CD4-positive, alpha-beta memory T cell (primary cell): ENCODE measurements at regions of chr4 and their contacts with region 1.

Region 1: GRCh38 chr4:110516106-110516922 is 40.4 kb downstream of the ENPEP start:
- DNase-seq: peak; percentile 69 to 75 (median 70)
- H3K4me3 ChIP-seq: peak overlapping the region; percentile 84 to 97
- H3K4me3 Mint-ChIP-seq: peak overlapping the region; percentile 91 to 99 (median 97)
- H3K27ac ChIP-seq: peak overlapping the region; percentile 48
- H3K27ac Mint-ChIP-seq: peak overlapping the region in 6 of 7 donors; percentile 41 to 96 (median 90)
- H3K4me1 ChIP-seq: peaks cover 12% of the 10 kb centered on the region
- H3K4me1 Mint-ChIP-seq: peaks cover 10 to 16% (median 13%) of the 10 kb centered on the region in 4 donors
- H3K27me3 ChIP-seq: no peaks in the 10 kb centered on the region
- H3K27me3 Mint-ChIP-seq: peaks cover 0 to 5% of the 10 kb centered on the region in 2 donors

Region 2: GRCh38 chr4:109424093-109424841 is 1092.0 kb before region 1 on chr4:
- CTCF ChIA-PET with region 1: interaction called, 4 read pairs
- POLR2A ChIA-PET with region 1: no interaction called
- intact Hi-C with region 1: loop called (anchors 2 kb)
- DNase-seq: no peak
- H3K4me3 ChIP-seq: no peak overlapping the region
- H3K4me3 Mint-ChIP-seq: no peak overlapping the region
- H3K27ac ChIP-seq: no peak overlapping the region
- H3K27ac Mint-ChIP-seq: no peak overlapping the region
- H3K4me1 ChIP-seq: peaks cover 3% of the 10 kb centered on the region
- H3K4me1 Mint-ChIP-seq: peaks cover 0 to 4% (median 3%) of the 10 kb centered on the region in 4 donors
- H3K27me3 ChIP-seq: no peaks in the 10 kb centered on the region
- H3K27me3 Mint-ChIP-seq: peaks cover 0 to 3% of the 10 kb centered on the region in 2 donors

Region 3: DNA sequence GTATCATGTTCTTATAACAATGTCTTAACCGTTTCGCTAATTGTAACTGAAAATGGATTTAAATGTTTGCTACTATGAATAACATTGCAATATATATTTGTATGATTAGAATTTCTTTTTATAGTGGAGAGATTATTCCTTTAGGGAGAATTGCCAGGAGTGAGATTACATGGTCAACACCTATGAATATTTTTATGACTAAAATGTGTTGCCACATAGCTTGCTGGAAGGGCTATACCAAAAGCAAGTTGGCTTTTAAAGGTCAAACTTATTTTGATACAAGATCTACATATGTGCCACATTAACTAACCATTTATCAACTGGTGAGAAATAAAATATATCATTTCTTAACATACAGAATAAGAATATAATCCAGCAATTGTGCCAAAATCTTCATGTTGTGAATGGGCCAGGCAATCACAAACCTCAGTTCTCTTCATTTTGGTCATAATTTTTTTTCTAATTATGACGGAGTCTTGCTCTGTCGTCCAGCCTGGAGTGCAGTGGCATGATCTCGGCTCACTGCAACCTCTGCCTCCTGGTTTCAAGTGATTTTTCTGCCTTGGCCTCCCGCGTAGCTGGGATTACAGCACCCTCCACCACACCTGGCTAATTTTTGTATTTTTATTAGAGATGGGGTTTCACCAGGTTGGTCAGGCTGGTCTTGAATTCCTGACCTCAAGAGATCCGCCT is 613.6 kb before region 1 on chr4:
- CTCF ChIA-PET with region 1: no interaction called
- POLR2A ChIA-PET with region 1: no interaction called
- intact Hi-C with region 1: no loop called
- DNase-seq: no peak
- H3K4me3 ChIP-seq: no peak overlapping the region
- H3K4me3 Mint-ChIP-seq: no peak overlapping the region
- H3K27ac ChIP-seq: no peak overlapping the region
- H3K27ac Mint-ChIP-seq: no peak overlapping the region
- H3K4me1 ChIP-seq: no peaks in the 10 kb centered on the region
- H3K4me1 Mint-ChIP-seq: no peaks in the 10 kb centered on the region
- H3K27me3 ChIP-seq: no peaks in the 10 kb centered on the region
- H3K27me3 Mint-ChIP-seq: peaks cover 15 to 17% of the 10 kb centered on the region in 2 donors

Region 4: GRCh38 chr4:110005461-110006056 is 510.8 kb before region 1 on chr4:
- CTCF ChIA-PET with region 1: interaction called, 733 read pairs
- POLR2A ChIA-PET with region 1: no interaction called
- intact Hi-C with region 1: loop called (anchors 1 kb)
- DNase-seq: peak in 4 of 5 donors; percentile 55 to 60 (median 57)
- H3K4me3 ChIP-seq: no peak overlapping the region
- H3K4me3 Mint-ChIP-seq: no peak overlapping the region
- H3K27ac ChIP-seq: no peak overlapping the region
- H3K27ac Mint-ChIP-seq: no peak overlapping the region
- H3K4me1 ChIP-seq: no peaks in the 10 kb centered on the region
- H3K4me1 Mint-ChIP-seq: peaks cover 3 to 8% (median 5%) of the 10 kb centered on the region in 4 donors
- H3K27me3 ChIP-seq: no peaks in the 10 kb centered on the region
- H3K27me3 Mint-ChIP-seq: no peaks in the 10 kb centered on the region

Region 5: GRCh38 chr4:110049951-110050925 is 466.1 kb before region 1 on chr4:
- CTCF ChIA-PET with region 1: interaction called, 28 read pairs
- POLR2A ChIA-PET with region 1: no interaction called
- intact Hi-C with region 1: loop called (anchors 1 kb)
- DNase-seq: peak; percentile 36 to 60 (median 50)
- H3K4me3 ChIP-seq: no peak overlapping the region
- H3K4me3 Mint-ChIP-seq: no peak overlapping the region
- H3K27ac ChIP-seq: no peak overlapping the region
- H3K27ac Mint-ChIP-seq: peak overlapping the region in 2 of 7 donors; percentile 25 to 71
- H3K4me1 ChIP-seq: no peaks in the 10 kb centered on the region
- H3K4me1 Mint-ChIP-seq: peaks cover 0 to 2% (median under 1%) of the 10 kb centered on the region in 4 donors
- H3K27me3 ChIP-seq: no peaks in the 10 kb centered on the region
- H3K27me3 Mint-ChIP-seq: no peaks in the 10 kb centered on the region

Region 6: DNA sequence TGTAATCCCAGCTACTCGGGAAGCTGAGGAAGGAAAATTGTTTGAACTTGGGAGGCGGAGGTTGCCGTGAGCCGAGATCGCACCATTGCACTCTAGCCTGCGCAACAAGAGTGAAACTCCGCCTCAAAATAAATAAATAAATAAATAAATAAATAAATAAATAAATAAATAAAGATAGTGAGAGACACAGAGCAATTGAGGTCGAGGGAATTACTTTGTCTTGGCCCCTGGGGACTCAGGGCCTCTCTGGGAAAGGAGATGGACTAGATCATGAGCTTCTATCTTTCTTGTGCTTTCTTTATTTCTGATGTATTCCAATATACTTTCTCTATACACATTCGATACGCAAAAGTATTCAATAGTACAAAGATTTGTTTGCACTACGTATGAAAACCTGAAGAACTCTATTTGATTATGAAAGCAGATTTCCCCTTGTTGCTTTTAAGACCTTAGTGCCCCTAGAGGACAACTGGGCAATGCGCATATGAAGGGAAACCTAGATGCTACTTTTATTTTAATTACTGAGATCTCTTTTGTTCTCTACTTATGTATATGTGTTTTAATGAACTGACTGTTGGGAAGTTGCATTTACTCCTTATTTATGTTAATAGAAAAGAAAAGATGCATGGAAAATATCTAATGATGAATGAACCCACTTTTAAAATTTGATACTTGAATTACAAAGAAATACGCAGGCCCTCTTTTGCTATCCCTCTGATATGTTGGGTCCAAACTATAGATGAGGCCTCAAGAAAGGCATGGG is 305.1 kb before region 1 on chr4:
- CTCF ChIA-PET with region 1: interaction called, 3 read pairs
- POLR2A ChIA-PET with region 1: no interaction called
- intact Hi-C with region 1: loop called (anchors 5 kb)
- DNase-seq: peak in 4 of 5 donors; percentile 39 to 48 (median 43)
- H3K4me3 ChIP-seq: no peak overlapping the region
- H3K4me3 Mint-ChIP-seq: peak overlapping the region in 3 of 8 donors; percentile 35 to 49 (median 36)
- H3K27ac ChIP-seq: no peak overlapping the region
- H3K27ac Mint-ChIP-seq: no peak overlapping the region
- H3K4me1 ChIP-seq: no peaks in the 10 kb centered on the region
- H3K4me1 Mint-ChIP-seq: peaks cover 0 to 5% (median 3%) of the 10 kb centered on the region in 4 donors
- H3K27me3 ChIP-seq: no peaks in the 10 kb centered on the region
- H3K27me3 Mint-ChIP-seq: peaks cover 2 to 3% of the 10 kb centered on the region in 2 donors